ENCODE measurements at regions of chr6 and their contacts with region 1.

Region 1: GRCh38 chr6:37169496-37170272 is at the start of gene PIM1:
- DNase-seq: peak; percentile 99
- H3K4me3 Mint-ChIP-seq: peak within 1 kb of the TSS; percentile 97
- H3K27ac Mint-ChIP-seq: peak within 1 kb of the TSS; percentile 99
- H3K4me1 Mint-ChIP-seq: peaks cover 21% of the 10 kb centered on the region
- H3K27me3 Mint-ChIP-seq: peaks cover 10% of the 10 kb centered on the region

Region 2: GRCh38 chr6:37182736-37183590 is 13.3 kb after region 1 on chr6:
- CTCF ChIA-PET with region 1: interaction called, 30 read pairs
- DNase-seq: peak; percentile 84
- H3K4me3 Mint-ChIP-seq: peak overlapping the region; percentile 67
- H3K27ac Mint-ChIP-seq: peak overlapping the region; percentile 95
- H3K4me1 Mint-ChIP-seq: peaks cover 86% of the 10 kb centered on the region
- H3K27me3 Mint-ChIP-seq: no peaks in the 10 kb centered on the region

Region 3: GRCh38 chr6:37190159-37190535 is 20.5 kb after region 1 on chr6:
- CTCF ChIA-PET with region 1: interaction called, 22 read pairs
- DNase-seq: peak; percentile 31
- H3K4me3 Mint-ChIP-seq: no peak overlapping the region
- H3K27ac Mint-ChIP-seq: peak overlapping the region; percentile 84
- H3K4me1 Mint-ChIP-seq: peaks cover 80% of the 10 kb centered on the region
- H3K27me3 Mint-ChIP-seq: no peaks in the 10 kb centered on the region

Region 4: GRCh38 chr6:37207903-37208456 is 38.3 kb after region 1 on chr6:
- CTCF ChIA-PET with region 1: interaction called, 275 read pairs
- DNase-seq: peak; percentile 95
- H3K4me3 Mint-ChIP-seq: peak overlapping the region; percentile 46
- H3K27ac Mint-ChIP-seq: peak overlapping the region; percentile 89
- H3K4me1 Mint-ChIP-seq: peaks cover 73% of the 10 kb centered on the region
- H3K27me3 Mint-ChIP-seq: no peaks in the 10 kb centered on the region

Region 5: DNA sequence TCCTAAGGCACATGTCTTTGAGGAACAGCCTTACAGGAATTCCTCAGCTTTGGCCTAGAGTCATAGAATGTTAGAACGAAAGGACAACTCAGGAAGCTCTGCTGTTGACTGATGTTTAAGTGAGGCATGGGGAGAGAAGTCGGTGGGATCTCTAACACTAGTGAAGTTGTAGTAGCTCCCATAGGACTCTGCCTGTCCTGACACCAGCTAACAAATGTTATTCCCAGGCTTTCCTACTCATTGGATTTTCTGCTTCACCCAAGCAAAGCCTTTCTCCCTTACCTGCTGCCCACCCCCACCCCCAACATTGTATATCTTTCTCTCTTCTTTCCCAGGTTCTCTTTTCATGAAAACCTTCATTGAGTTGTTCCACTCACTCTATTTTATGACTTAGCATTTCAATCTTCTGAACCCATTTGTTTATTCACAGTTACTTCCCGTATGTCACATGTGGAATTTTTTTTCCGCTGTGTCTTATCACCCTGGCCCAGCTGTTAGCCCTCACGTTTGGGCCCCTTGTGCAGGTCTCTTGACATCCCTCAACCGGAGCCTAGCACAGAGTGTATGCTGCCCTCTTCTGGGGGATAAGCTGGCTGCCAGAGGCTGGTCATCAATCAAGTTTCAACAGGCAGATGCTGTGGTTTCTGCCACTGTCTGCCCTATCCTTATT is 144.9 kb after region 1 on chr6:
- CTCF ChIA-PET with region 1: interaction called, 10 read pairs
- DNase-seq: peak; percentile 75
- H3K4me3 Mint-ChIP-seq: no peak overlapping the region
- H3K27ac Mint-ChIP-seq: no peak overlapping the region
- H3K4me1 Mint-ChIP-seq: peaks cover 17% of the 10 kb centered on the region
- H3K27me3 Mint-ChIP-seq: no peaks in the 10 kb centered on the region

Measured in activated naive CD4-positive, alpha-beta T cell treated with anti-CD3 and anti-CD28 coated beads, Interleukin-2, amount 10 ng/mL, durations not matched to agents 7 days and 5 days (primary cell).